ENCODE measurements at regions of chr9 and their contacts with region 1.

Region 1: GRCh38 chr9:92634712-92635605 is 35.0 kb downstream of the IPPK start:
- DNase-seq: peak; percentile 68 to 87 (median 84)
- H3K4me3 ChIP-seq: no peak overlapping the region
- H3K27ac ChIP-seq: no peak overlapping the region
- H3K4me1 ChIP-seq: peaks cover 0 to 3% (median 0%) of the 10 kb centered on the region in 3 donors
- H3K27me3 ChIP-seq: no peaks in the 10 kb centered on the region
- CTCF ChIP-seq: peak; percentile 95

Region 2: GRCh38 chr9:92133949-92134604 is 500.9 kb before region 1 on chr9:
- intact Hi-C with region 1: loop called (anchors 10 kb)
- DNase-seq: peak; percentile 89 to 92 (median 90)
- H3K4me3 ChIP-seq: peak overlapping the region in 1 of 3 donors; percentile 29
- H3K27ac ChIP-seq: no peak overlapping the region
- H3K4me1 ChIP-seq: peaks cover 0 to 4% (median 0%) of the 10 kb centered on the region in 3 donors
- H3K27me3 ChIP-seq: no peaks in the 10 kb centered on the region
- CTCF ChIP-seq: peak; percentile 83

Region 3: DNA sequence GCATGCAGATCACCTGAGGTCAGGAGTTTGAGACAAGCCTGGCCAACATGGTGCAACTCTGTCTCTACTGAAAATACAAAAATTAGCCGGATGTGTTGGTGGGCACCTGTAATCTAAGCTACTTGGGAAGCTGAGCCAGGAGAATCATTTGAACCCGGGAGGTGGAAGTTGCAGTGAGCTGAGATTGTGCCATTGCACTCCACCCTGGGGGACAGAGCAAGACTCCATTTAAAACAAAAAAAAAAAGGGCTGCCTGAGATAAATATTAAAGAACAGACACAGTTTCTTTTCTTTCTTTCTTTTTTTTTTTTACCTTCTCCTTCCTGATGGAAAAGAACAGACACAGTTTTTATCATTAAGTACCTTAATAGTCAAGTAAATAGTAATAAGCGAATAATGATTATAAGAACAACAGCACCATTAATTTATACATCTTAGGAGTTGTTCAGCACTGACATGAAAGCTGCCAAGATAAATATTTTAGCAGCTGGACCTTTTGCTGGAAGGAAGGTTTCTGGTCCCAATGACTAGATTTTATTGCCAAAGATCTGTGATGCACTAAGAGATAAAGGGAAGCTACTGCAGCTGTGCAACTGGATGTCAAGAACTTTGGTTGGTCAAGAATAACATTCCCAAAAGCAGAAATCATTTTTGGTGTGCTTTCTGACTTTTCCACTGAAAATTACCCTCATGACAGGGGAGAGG is 302.2 kb before region 1 on chr9:
- intact Hi-C with region 1: loop called (anchors 10 kb)
- DNase-seq: peak in 2 of 5 donors; percentile 56 to 79
- H3K4me3 ChIP-seq: no peak overlapping the region
- H3K27ac ChIP-seq: no peak overlapping the region
- H3K4me1 ChIP-seq: no peaks in the 10 kb centered on the region
- H3K27me3 ChIP-seq: no peaks in the 10 kb centered on the region
- CTCF ChIP-seq: no peak